ENCODE measurements at regions of chr5 and their contacts with region 1.

Region 1: GRCh38 chr5:53560506-53561191 is at the start of gene NDUFS4:
- DNase-seq: peak; percentile 94
- H3K4me3 Mint-ChIP-seq: peak within 1 kb of the TSS; percentile 97
- H3K27ac Mint-ChIP-seq: peak within 1 kb of the TSS; percentile 92
- H3K4me1 Mint-ChIP-seq: peaks cover 26% of the 10 kb centered on the region
- H3K27me3 Mint-ChIP-seq: peaks cover 18% of the 10 kb centered on the region
- total RNA-seq, gene NDUFS4: 81.4 to 84.1 TPM

Region 2: DNA sequence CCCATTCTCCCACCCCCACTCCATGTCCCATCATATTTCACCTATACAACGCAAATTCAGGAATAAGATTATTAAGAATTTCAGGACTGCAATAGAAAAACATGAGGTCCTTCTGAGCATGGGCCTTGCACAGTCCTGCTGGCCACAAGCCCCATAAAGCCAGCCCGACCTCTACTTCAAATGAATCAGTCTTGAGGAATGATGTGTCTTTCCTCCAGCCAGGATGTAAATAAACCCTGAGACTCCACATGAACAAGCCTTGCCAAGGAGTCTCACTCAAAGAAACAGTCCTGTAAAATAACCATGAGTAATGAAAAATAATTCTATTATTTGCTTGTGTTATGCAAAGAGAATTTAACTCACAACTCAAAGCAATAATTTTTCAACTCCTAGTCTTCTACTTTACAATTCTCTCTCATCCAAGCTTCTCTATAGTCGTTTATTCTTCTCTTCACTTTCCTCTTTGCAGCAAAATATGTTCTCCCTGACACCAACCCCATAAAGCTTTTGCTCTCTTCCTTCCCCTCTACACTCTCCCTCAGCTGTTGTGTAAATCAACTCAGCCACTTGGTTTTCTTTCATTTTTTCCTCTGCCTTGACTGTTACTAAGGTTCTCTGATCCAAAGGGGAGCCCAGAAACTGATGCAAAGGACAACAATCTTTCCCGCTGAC is 311.0 kb before region 1 on chr5:
- CTCF ChIA-PET with region 1: no interaction called
- intact Hi-C with region 1: no loop called
- DNase-seq: no peak
- H3K4me3 Mint-ChIP-seq: no peak overlapping the region
- H3K27ac Mint-ChIP-seq: no peak overlapping the region
- H3K4me1 Mint-ChIP-seq: no peaks in the 10 kb centered on the region
- H3K27me3 Mint-ChIP-seq: peaks cover 4% of the 10 kb centered on the region

Region 3: GRCh38 chr5:53667621-53668020 is 107.0 kb after region 1 on chr5:
- CTCF ChIA-PET with region 1: no interaction called
- intact Hi-C with region 1: no loop called
- DNase-seq: no peak
- H3K4me3 Mint-ChIP-seq: no peak overlapping the region
- H3K27ac Mint-ChIP-seq: no peak overlapping the region
- H3K4me1 Mint-ChIP-seq: no peaks in the 10 kb centered on the region
- H3K27me3 Mint-ChIP-seq: no peaks in the 10 kb centered on the region

Region 4: GRCh38 chr5:53991942-53992341 is 431.3 kb after region 1 on chr5:
- CTCF ChIA-PET with region 1: no interaction called
- intact Hi-C with region 1: loop called (anchors 10 kb)
- DNase-seq: no peak
- H3K4me3 Mint-ChIP-seq: no peak overlapping the region
- H3K27ac Mint-ChIP-seq: no peak overlapping the region
- H3K4me1 Mint-ChIP-seq: peaks cover 4% of the 10 kb centered on the region
- H3K27me3 Mint-ChIP-seq: no peaks in the 10 kb centered on the region